ENCODE measurements at regions of chr11 and their contacts with region 1.

Region 1: DNA sequence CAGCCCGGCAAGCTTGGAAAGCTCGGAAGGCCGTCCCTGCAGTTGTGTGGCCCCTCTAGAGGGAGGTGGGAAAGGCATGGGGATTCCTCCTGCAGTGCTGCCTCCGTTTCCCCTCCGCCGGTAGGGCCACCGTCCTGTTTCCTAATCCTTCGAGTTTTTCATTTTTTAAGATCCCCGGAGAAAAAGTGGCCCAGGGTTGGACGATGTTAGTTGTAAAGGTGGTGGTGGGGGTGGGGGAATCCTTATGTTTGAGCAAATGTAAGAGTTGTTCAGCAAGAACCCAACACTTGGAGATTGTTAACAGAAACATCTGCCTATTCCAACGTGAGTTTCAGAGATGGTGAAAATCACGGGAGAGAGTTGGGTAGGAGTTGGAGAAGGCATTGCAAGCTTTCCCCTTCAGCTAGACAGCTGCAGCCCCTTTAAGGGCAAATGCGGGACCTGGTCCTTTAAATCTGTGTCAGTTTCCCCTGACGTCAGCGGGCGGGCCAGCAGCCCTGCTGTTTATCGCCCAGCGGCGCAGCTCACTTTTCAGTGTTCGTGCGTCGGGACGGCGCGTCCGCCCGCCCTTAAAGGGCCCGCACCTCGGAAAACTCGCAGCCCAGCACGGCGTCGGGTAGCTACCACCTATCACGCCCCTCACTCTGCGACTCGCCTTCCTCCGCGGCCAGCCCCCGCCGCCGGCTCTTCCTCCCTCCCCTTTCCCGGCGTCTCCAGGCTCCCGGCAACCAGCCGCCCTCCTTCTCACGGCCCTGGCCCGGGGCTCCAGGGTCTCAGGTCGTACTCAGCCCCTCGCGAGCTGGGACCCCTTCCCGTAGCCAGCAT is at the start of gene SIDT2:
- DNase-seq: peak; percentile 94
- ATAC-seq: peak; percentile 87
- H3K4me3 Mint-ChIP-seq: peak within 1 kb of the TSS; percentile 92
- H3K27ac Mint-ChIP-seq: peak within 1 kb of the TSS; percentile 95
- H3K4me1 Mint-ChIP-seq: peaks cover 26% of the 10 kb centered on the region
- H3K27me3 Mint-ChIP-seq: peaks cover 6% of the 10 kb centered on the region
- CTCF ChIP-seq: no peak
- total RNA-seq, gene SIDT2: 20.7 to 27.6 TPM (median 20.9 TPM) in 3 replicates

Region 2: GRCh38 chr11:117199061-117199915 is 20.9 kb after region 1 on chr11 and contains the start of gene TAGLN:
- CTCF ChIA-PET with region 1: interaction called, 48 read pairs
- POLR2A ChIA-PET with region 1: interaction called, 10 read pairs
- DNase-seq: peak; percentile 84
- ATAC-seq: peak; percentile 72
- H3K4me3 Mint-ChIP-seq: peak within 1 kb of the TSS; percentile 63
- H3K27ac Mint-ChIP-seq: peak within 1 kb of the TSS; percentile 83
- H3K4me1 Mint-ChIP-seq: peaks cover 36% of the 10 kb centered on the region
- H3K27me3 Mint-ChIP-seq: no peaks in the 10 kb centered on the region; the same call in 1 of the 2 replicates
- CTCF ChIP-seq: no peak
- total RNA-seq, gene TAGLN: 51.1 to 71.5 TPM (median 53.9 TPM) in 3 replicates

Region 3: GRCh38 chr11:117226388-117227385 is 48.3 kb after region 1 on chr11:
- CTCF ChIA-PET with region 1: interaction called, 68 read pairs
- POLR2A ChIA-PET with region 1: interaction called, 4 read pairs
- DNase-seq: no peak
- ATAC-seq: peak; percentile 92
- H3K4me3 Mint-ChIP-seq: no peak overlapping the region
- H3K27ac Mint-ChIP-seq: no peak overlapping the region; the same call in 1 of the 2 replicates
- H3K4me1 Mint-ChIP-seq: peaks cover 14% of the 10 kb centered on the region
- H3K27me3 Mint-ChIP-seq: no peaks in the 10 kb centered on the region
- CTCF ChIP-seq: peak; percentile 52

Region 4: GRCh38 chr11:117232092-117232878 is 53.9 kb after region 1 on chr11 and contains the start of gene RNF214:
- CTCF ChIA-PET with region 1: interaction called, 68 read pairs
- POLR2A ChIA-PET with region 1: interaction called, 3 read pairs
- DNase-seq: peak; percentile 68
- ATAC-seq: peak; percentile 91
- H3K4me3 Mint-ChIP-seq: peak within 1 kb of the TSS; percentile 99
- H3K27ac Mint-ChIP-seq: peak within 1 kb of the TSS; percentile 99
- H3K4me1 Mint-ChIP-seq: peaks cover 25% of the 10 kb centered on the region
- H3K27me3 Mint-ChIP-seq: no peaks in the 10 kb centered on the region
- CTCF ChIP-seq: peak; percentile 93
- total RNA-seq, gene RNF214: 35.4 to 45.0 TPM (median 37.8 TPM) in 3 replicates